HAP-1 (cell line): ENCODE measurements at regions of chr14 and their contacts with region 1.

Region 1: GRCh38 chr14:58072288-58073071 is 79.5 kb downstream of the ARMH4 start:
- DNase-seq: peak; percentile 65 to 76
- H3K4me3 ChIP-seq: no peak overlapping the region
- H3K4me1 ChIP-seq: no peaks in the 10 kb centered on the region
- H3K27me3 ChIP-seq: no peaks in the 10 kb centered on the region

Region 2: GRCh38 chr14:57486767-57487379 is 585.6 kb before region 1 on chr14:
- in situ Hi-C with region 1: loop called (anchors 25 kb)
- DNase-seq: peak; percentile 18 to 50
- H3K4me3 ChIP-seq: no peak overlapping the region
- H3K4me1 ChIP-seq: no peaks in the 10 kb centered on the region
- H3K27me3 ChIP-seq: peaks cover 16% of the 10 kb centered on the region

Region 3: DNA sequence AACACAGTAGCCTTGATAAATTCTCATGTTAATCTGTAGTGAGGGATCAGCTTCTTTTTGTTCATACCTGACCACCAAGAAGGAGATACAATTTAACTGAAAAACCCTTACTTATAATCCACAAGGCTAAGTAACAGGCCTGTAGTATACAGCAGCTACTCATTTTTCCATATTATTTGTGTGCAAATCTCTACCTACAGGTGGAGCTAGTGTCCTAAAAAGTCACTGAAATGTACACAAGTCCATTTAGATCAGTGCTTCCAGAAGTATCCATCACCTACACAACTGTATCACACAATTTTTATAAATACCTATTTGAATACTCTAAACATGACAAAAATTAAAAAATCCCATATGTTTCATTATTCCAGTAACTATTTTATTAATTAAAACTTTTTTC is 379.8 kb before region 1 on chr14:
- in situ Hi-C with region 1: loop called (anchors 25 kb)
- DNase-seq: peak in 1 of 2 experiments; percentile 27
- H3K4me3 ChIP-seq: no peak overlapping the region
- H3K4me1 ChIP-seq: no peaks in the 10 kb centered on the region
- H3K27me3 ChIP-seq: no peaks in the 10 kb centered on the region

Region 4: GRCh38 chr14:58193542-58193941 is 121.1 kb after region 1 on chr14:
- in situ Hi-C with region 1: no loop called
- DNase-seq: no peak
- H3K4me3 ChIP-seq: no peak overlapping the region
- H3K4me1 ChIP-seq: no peaks in the 10 kb centered on the region
- H3K27me3 ChIP-seq: no peaks in the 10 kb centered on the region